ENCODE measurements at regions of chr7 and their contacts with region 1.

Region 1: GRCh38 chr7:81669476-81670105 is 100.3 kb downstream of the HGF start:
- DNase-seq: no peak
- ATAC-seq: no peak
- H3K4me3 ChIP-seq: no peak overlapping the region
- H3K27ac ChIP-seq: no peak overlapping the region
- H3K4me1 ChIP-seq: no peaks in the 10 kb centered on the region
- H3K27me3 ChIP-seq: no peaks in the 10 kb centered on the region
- CTCF ChIP-seq: no peak
- POLR2A ChIP-seq: no peak
- RAD21 ChIP-seq: no peak

Region 2: DNA sequence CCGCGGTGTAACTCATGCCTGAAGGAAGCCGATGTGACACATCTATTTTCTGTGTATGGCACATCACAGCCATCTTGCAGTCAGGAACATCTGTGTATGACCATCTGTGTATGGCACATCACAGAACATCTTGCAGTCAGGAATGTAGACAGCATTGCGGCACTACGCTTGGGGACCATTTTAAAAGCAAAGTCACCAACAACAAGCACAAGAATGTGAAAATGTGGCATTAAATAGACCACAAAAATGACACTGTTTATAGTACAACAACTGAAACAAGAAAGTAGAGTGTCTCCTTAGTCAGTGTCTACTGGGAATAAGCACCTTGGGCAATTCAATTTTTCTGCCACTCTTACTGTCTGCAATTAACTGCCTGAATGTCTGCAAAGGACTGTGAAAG is 24.2 kb before region 1 on chr7:
- CTCF ChIA-PET with region 1: no interaction called
- POLR2A ChIA-PET with region 1: no interaction called
- RAD21 ChIA-PET with region 1: no interaction called
- intact Hi-C with region 1: loop called (anchors 1 kb)
- DNase-seq: no peak
- ATAC-seq: no peak
- H3K4me3 ChIP-seq: no peak overlapping the region
- H3K27ac ChIP-seq: no peak overlapping the region
- H3K4me1 ChIP-seq: no peaks in the 10 kb centered on the region
- H3K27me3 ChIP-seq: no peaks in the 10 kb centered on the region
- CTCF ChIP-seq: no peak
- POLR2A ChIP-seq: no peak
- RAD21 ChIP-seq: no peak